H1 (cell line): ENCODE measurements at regions of chr20 and their contacts with region 1.

Region 1: GRCh38 chr20:61234008-61234802 is 17.9 kb upstream of the CDH4 start:
- DNase-seq: no peak
- H3K4me3 ChIP-seq: no peak overlapping the region
- H3K27ac ChIP-seq: no peak overlapping the region
- H3K4me1 ChIP-seq: peaks cover 0 to 6% (median 1%) of the 10 kb centered on the region in 4 experiments; a peak in 3 of 7 replicates
- H3K27me3 ChIP-seq: peaks cover 0 to 14% (median 6%) of the 10 kb centered on the region in 4 experiments; a peak in 4 of 7 replicates
- CTCF ChIP-seq: no peak
- EP300 ChIP-seq: no peak
- POLR2A ChIP-seq: no peak
- RAD21 ChIP-seq: no peak

Region 2: GRCh38 chr20:61129311-61129710 is 104.9 kb before region 1 on chr20:
- CTCF ChIA-PET with region 1: interaction called, 10 read pairs
- POLR2A ChIA-PET with region 1: no interaction called
- DNase-seq: no peak
- H3K4me3 ChIP-seq: no peak overlapping the region
- H3K27ac ChIP-seq: no peak overlapping the region
- H3K4me1 ChIP-seq: no peaks in the 10 kb centered on the region
- H3K27me3 ChIP-seq: peaks cover 0 to 41% (median 27%) of the 10 kb centered on the region in 4 experiments; a peak in 5 of 7 replicates
- CTCF ChIP-seq: no peak
- EP300 ChIP-seq: no peak
- POLR2A ChIP-seq: no peak
- RAD21 ChIP-seq: no peak

Region 3: DNA sequence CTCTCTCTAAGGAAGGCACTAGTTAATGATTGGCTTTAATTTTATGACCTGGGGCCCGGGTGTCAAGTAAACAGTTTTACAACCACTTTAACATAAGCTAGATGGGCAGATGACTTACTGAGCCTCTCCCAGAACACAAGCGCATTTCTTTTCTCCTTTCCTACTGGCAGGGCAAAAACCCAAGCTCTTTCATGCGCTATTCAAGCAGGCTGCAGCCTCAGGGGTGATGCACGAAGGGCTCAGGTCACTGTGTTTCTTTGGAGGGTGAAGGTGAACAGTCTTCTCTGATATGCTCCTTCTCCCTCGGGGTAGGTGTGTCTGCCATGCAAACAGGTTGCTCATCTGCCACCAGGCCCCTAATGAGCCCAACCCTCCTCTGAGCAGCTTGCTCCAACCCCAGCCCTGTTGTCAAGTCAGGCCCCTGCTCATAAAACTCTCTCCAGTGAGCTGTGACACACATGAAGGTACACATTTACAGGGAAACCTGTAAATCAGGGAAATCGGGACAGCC is 55.6 kb before region 1 on chr20:
- CTCF ChIA-PET with region 1: interaction called, 13 read pairs
- POLR2A ChIA-PET with region 1: no interaction called
- DNase-seq: no peak
- H3K4me3 ChIP-seq: no peak overlapping the region
- H3K27ac ChIP-seq: no peak overlapping the region
- H3K4me1 ChIP-seq: peaks cover 0 to 5% (median 0%) of the 10 kb centered on the region in 4 experiments; a peak in 1 of 7 replicates
- H3K27me3 ChIP-seq: peaks cover 2 to 26% (median 13%) of the 10 kb centered on the region in 4 experiments
- CTCF ChIP-seq: no peak
- EP300 ChIP-seq: no peak
- POLR2A ChIP-seq: no peak
- RAD21 ChIP-seq: no peak

Region 4: DNA sequence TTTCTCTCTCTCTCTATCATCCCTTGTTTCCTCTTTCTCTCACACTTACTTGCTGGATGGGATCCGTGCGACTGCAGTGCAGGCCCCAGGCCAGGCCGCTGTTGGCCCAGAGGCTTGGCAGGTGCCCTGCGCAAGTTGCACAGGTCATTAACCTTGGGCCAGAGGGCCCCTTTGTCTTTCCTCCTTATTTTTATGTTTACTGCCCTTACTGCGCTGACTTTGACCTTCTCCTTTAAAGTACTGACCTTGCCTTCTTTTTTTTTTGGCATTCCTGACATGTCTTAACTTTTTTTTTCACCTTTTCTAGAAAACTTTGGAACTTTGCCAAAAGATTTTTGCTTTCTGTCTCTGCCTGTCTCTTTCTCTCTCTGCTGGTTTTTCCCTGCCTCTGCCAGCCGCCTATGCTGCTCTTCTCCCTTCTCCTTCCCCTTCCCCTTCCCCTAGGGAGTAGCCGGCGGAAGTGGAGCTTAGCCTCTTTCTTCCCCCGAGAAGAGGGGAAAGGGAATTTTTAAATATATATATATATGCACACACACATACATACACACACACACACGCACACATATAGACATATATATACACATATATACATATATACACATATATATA is 41.8 kb before region 1 on chr20:
- CTCF ChIA-PET with region 1: interaction called, 10 read pairs
- POLR2A ChIA-PET with region 1: no interaction called
- DNase-seq: no peak
- H3K4me3 ChIP-seq: peak overlapping the region in 1 of 4 experiments; percentile 43; a peak in 3 of 8 replicates
- H3K27ac ChIP-seq: no peak overlapping the region
- H3K4me1 ChIP-seq: peaks cover 0 to 5% (median 1%) of the 10 kb centered on the region in 4 experiments; a peak in 3 of 7 replicates
- H3K27me3 ChIP-seq: peaks cover 0 to 9% (median 3%) of the 10 kb centered on the region in 4 experiments; a peak in 4 of 7 replicates
- CTCF ChIP-seq: no peak
- EP300 ChIP-seq: no peak
- POLR2A ChIP-seq: no peak
- RAD21 ChIP-seq: no peak

Region 5: DNA sequence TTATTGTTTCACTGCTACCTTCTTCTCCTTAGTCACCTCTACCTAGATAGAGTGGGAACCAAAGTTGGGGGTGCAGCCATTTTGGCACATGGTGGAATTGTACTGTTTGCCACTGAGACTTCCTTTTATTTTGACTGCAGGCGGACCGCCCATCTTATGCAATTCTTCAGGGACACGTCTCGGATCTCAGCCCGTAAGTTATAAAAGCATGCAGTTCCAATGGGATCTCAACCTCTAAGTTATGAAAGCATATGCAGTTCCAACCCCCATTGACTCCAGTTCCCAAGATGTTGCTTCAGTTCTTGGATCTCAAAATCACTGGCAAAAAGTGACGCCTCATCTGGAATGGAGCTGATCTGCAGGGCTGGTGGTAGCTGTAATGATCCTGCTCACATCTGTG is 23.3 kb before region 1 on chr20:
- CTCF ChIA-PET with region 1: interaction called, 13 read pairs
- POLR2A ChIA-PET with region 1: no interaction called
- DNase-seq: no peak
- H3K4me3 ChIP-seq: no peak overlapping the region
- H3K27ac ChIP-seq: no peak overlapping the region
- H3K4me1 ChIP-seq: no peaks in the 10 kb centered on the region; a peak in 1 of 7 replicates
- H3K27me3 ChIP-seq: peaks cover 0 to 18% (median 13%) of the 10 kb centered on the region in 4 experiments; a peak in 5 of 7 replicates
- CTCF ChIP-seq: no peak
- EP300 ChIP-seq: no peak
- POLR2A ChIP-seq: no peak
- RAD21 ChIP-seq: no peak

Region 6: GRCh38 chr20:61219021-61219431 is 15.2 kb before region 1 on chr20:
- CTCF ChIA-PET with region 1: interaction called, 12 read pairs
- POLR2A ChIA-PET with region 1: no interaction called
- DNase-seq: no peak
- H3K4me3 ChIP-seq: no peak overlapping the region
- H3K27ac ChIP-seq: no peak overlapping the region
- H3K4me1 ChIP-seq: no peaks in the 10 kb centered on the region
- H3K27me3 ChIP-seq: peaks cover 4 to 42% (median 20%) of the 10 kb centered on the region in 4 experiments
- CTCF ChIP-seq: no peak
- EP300 ChIP-seq: no peak
- POLR2A ChIP-seq: no peak
- RAD21 ChIP-seq: no peak

Region 7: GRCh38 chr20:61253264-61253639 is 19.0 kb after region 1 on chr20:
- CTCF ChIA-PET with region 1: interaction called, 17 read pairs
- POLR2A ChIA-PET with region 1: no interaction called
- DNase-seq: peak in 1 of 2 experiments; percentile 65
- H3K4me3 ChIP-seq: peak overlapping the region; percentile 38 to 74 (median 52)
- H3K27ac ChIP-seq: no peak overlapping the region
- H3K4me1 ChIP-seq: peaks cover 0 to 24% (median 6%) of the 10 kb centered on the region in 4 experiments; a peak in 5 of 7 replicates
- H3K27me3 ChIP-seq: peaks cover 16 to 72% (median 57%) of the 10 kb centered on the region in 4 experiments
- CTCF ChIP-seq: peak; percentile 10 to 40 (median 34)
- EP300 ChIP-seq: no peak
- POLR2A ChIP-seq: no peak
- RAD21 ChIP-seq: no peak; a peak in 1 of 4 replicates